AG04450 (cell line): ENCODE measurements at regions of chr1 and their contacts with region 1.

Region 1: DNA sequence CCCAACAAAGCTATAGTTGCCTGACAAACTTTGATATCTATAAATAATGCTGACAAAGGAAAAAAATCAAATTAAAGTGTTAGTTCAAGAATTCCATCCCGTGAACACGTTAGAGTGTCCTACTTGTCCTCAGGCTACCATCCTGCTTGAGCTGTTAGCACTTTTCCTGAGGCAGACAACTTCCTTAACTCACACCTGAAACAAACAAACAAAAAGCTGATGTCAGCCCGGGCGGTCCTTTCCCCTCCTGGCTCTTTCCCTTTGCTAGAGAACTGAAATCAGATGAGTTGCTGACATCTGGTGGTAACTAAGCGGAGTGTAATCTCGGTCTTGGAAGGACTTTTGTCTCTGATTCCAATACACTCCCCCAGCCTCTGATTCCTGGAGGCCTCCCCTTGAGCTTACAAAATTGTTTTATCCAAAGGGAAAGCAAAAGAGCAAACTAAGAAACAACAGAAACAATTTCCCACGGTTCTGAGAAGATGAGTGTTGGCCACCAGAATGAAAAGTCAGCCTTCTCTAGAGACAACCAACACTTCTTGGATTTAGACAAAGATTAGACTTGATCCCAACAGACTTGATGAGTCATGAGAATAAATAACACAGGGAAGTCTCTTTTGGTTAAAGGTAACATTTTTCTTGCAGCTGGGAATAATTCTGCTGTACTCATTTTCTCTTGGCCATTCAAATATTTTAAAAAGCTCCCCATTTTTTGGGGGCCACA is 135.4 kb downstream of the PROX1 start:
- DNase-seq: peak; percentile 10
- H3K4me3 ChIP-seq: no peak overlapping the region
- H3K27ac ChIP-seq: no peak overlapping the region
- H3K27me3 ChIP-seq: peaks cover 5% of the 10 kb centered on the region
- CTCF ChIP-seq: peak; percentile 69

Region 2: DNA sequence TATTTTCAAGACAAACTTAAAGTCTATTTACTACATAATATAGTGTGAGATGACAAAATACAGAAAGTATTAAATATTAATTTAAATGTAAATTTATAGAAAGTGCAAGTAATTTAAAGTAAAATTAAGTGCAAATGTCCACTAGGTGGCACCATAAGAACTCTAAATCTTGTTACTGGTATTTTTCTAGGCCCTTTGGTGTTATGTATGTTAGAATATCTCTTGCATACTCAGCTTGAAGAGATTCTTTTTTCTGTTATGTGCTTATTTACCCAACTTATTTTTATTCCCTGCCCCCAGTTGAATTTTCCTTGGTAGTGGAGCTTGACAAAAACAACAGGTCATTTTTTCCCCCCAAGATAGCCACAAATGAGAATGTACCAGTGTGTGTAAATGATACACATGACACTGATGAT is 1000.7 kb before region 1 on chr1:
- CTCF ChIA-PET with region 1: interaction called, 22 read pairs
- POLR2A ChIA-PET with region 1: no interaction called
- DNase-seq: peak; percentile 24
- H3K4me3 ChIP-seq: no peak overlapping the region
- H3K27ac ChIP-seq: no peak overlapping the region
- H3K27me3 ChIP-seq: no peaks in the 10 kb centered on the region
- CTCF ChIP-seq: peak; percentile 51

Region 3: DNA sequence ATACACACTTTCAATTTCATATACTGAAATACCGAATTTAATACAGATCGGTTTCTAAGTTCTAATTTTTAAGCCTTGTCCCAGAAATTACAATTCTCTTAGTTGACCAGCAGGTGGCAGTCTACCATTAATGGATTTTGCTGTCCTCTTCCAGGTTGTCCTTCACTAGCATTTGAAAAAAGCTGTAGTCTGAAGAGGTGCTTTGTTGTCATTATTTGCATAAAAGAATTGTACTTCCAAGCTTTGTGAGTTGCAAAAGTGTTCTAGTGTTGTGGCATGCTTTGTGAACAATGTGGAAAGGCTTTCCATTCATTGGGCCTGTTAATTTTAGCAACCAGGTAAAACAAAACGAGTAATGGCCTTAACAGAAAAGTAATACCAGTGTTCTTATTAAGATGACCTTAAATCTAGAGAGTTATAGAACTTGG is 878.5 kb before region 1 on chr1:
- CTCF ChIA-PET with region 1: interaction called, 18 read pairs
- POLR2A ChIA-PET with region 1: no interaction called
- DNase-seq: peak; percentile 27
- H3K4me3 ChIP-seq: no peak overlapping the region
- H3K27ac ChIP-seq: no peak overlapping the region
- H3K27me3 ChIP-seq: no peaks in the 10 kb centered on the region
- CTCF ChIP-seq: peak; percentile 73

Region 4: DNA sequence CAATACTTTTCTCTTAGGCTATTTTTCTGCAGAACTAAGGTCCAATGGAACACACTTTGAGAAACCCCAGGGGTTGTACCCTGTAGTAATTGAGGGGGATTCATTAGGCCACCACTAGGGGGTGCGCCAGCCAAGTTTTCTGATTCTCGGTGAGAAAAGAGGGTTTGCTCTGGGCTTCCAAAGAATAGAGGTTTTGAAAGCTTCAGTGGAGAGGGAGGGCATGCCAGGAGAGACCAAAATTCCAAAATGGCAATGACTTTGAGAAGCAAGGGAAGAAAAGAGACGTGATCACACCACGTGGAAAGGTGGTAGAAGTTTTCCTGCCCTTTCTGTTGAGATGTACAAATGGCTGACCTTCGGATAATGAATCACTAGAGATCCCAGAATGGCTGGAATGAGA is 748.9 kb before region 1 on chr1:
- CTCF ChIA-PET with region 1: interaction called, 15 read pairs
- POLR2A ChIA-PET with region 1: no interaction called
- DNase-seq: no peak
- H3K4me3 ChIP-seq: no peak overlapping the region
- H3K27ac ChIP-seq: no peak overlapping the region
- H3K27me3 ChIP-seq: no peaks in the 10 kb centered on the region
- CTCF ChIP-seq: peak; percentile 93

Region 5: DNA sequence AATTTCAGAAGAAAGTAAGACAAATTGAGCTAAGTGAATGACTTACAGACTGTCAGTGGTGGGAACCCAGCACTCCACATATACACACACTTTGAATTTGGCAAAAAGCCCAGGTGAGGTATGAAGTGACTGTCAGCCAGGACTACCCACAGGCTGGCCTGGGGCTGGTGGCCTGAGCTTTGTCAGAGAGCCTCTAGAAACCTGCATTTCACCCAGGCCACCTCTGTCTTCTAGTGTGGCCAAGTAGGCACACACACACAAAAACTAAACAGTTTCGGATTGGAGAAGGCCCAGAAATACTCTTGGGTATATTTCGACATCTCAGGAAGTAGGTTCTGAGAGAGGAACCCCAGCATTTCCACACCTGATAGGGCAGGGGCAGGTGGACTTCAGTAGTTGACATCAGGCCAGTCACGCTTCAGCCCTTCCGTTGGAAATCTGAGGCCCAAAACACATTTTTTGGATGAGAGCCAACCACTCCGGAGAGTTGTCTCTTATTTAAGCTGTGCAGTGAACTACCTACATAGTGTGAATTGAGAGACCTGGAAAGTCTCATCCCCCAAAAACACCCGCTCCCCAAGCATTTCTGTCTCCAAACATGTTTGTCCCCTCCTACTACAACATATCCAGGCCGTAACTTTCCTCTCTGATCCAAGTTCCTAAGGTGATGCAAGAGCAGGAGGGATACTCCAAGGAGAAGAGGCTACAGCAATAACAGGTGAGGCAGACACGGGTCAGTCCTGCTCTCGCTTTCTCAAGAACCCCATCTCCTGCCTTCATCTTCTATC is 302.7 kb before region 1 on chr1:
- CTCF ChIA-PET with region 1: interaction called, 11 read pairs
- POLR2A ChIA-PET with region 1: no interaction called
- DNase-seq: no peak
- H3K4me3 ChIP-seq: no peak overlapping the region
- H3K27ac ChIP-seq: no peak overlapping the region
- H3K27me3 ChIP-seq: no peaks in the 10 kb centered on the region
- CTCF ChIP-seq: no peak

Region 6: GRCh38 chr1:214050513-214051401 is 72.5 kb before region 1 on chr1:
- CTCF ChIA-PET with region 1: no interaction called
- POLR2A ChIA-PET with region 1: no interaction called
- DNase-seq: no peak
- H3K4me3 ChIP-seq: no peak overlapping the region
- H3K27ac ChIP-seq: no peak overlapping the region
- H3K27me3 ChIP-seq: no peaks in the 10 kb centered on the region
- CTCF ChIP-seq: no peak

Region 7: DNA sequence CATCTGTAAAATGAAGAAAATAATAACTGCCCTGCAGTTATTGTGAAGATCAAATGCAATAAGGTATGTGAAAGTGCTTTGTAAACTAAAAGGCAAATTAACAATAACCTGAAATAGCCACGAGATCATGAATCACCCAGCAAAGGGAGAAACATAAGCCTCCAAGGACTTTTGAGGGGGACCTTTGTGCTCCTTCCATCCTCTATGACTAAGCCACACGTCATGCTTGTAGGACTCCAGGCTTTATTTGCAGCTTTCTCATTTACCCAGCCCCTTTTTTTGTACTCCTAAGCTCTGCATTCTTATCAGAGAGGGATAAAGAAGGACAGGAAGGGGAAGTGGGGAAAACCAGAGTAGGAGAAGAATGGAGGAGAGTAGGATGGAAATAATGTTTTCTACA is 20.3 kb before region 1 on chr1:
- CTCF ChIA-PET with region 1: interaction called, 11 read pairs
- POLR2A ChIA-PET with region 1: no interaction called
- DNase-seq: peak; percentile 63
- H3K4me3 ChIP-seq: no peak overlapping the region
- H3K27ac ChIP-seq: peak overlapping the region; percentile 74
- H3K27me3 ChIP-seq: no peaks in the 10 kb centered on the region
- CTCF ChIP-seq: no peak

Region 8: GRCh38 chr1:214143006-214143992 is 20.1 kb after region 1 on chr1:
- CTCF ChIA-PET with region 1: no interaction called
- POLR2A ChIA-PET with region 1: no interaction called
- DNase-seq: no peak
- H3K4me3 ChIP-seq: no peak overlapping the region
- H3K27ac ChIP-seq: no peak overlapping the region
- H3K27me3 ChIP-seq: no peaks in the 10 kb centered on the region
- CTCF ChIP-seq: no peak

Region 9: DNA sequence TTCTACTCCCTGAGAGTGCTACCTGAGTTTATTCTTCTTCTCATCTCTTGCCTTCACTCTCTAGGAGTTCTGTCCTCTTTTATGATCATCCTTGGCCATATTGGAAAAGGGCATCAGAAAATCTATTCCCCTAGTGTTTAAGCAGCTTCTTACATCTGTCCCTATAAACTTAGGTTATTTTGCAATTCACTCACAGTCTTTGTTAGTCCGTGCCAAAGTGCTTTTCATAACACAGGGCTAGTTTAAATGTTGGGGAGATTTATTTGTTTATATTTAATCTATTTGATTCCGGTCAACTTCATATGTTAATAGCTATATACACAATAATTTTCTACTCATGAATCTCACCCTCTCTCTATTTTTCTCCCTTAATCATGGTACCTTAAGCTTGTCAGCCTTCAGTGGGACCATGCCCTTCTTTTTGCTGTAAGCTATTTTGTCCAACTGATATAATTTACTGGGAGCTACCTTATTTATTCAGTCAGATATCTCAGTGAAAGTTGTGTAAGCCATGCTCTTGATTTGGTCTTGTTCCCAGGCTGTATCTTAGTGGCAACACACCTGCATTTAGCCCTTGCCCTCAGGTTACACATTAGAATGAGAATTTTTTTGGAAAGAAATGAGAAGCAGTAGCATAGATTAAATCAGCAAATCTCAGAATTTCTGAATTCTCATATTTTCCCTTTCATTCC is 51.4 kb after region 1 on chr1:
- CTCF ChIA-PET with region 1: no interaction called
- POLR2A ChIA-PET with region 1: no interaction called
- DNase-seq: no peak
- H3K4me3 ChIP-seq: no peak overlapping the region
- H3K27ac ChIP-seq: no peak overlapping the region
- H3K27me3 ChIP-seq: no peaks in the 10 kb centered on the region
- CTCF ChIP-seq: no peak